SK-N-SH (cell line): ENCODE measurements at regions of chr2 and their contacts with region 1.

Region 1: DNA sequence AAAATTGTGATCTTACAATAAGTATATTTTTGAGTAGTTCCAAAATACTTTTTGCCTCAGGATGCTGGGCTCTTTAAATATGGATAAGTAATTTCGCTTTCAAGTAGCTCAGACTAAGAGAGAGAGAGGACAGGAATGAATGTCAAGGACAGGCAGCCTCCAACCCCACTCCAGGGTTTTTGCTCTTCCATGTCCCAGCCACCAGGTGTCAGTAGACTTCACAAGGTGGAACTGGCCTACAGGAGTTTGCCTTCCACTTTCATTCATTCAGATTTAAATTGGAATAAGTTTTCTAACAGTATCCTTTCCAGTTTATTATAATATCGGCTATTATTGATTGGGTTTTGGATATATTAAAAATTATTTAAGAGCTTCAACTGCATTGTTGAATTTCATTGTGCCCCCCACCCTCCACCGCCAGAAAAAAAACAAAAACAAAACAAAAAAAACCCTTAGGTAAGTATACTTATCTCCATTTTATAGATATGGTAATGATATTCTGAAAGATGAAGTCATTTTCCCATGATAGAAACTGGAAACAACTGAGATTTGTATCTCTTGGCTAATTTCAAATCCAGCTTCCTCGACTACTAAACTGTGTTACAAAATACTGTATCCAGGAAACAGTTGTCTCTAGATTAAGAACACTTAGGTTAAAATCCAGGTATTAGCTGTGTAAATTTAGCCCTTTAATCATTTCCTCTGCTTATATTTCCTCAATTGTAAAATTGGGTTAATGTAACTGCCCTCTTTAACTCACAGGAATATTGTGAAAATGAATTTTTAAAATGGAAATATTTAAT is 793.1 kb downstream of the ERBB4 start:
- DNase-seq: peak; percentile 65
- H3K4me3 ChIP-seq: no peak overlapping the region; a peak in 1 of 4 replicates
- H3K27ac ChIP-seq: no peak overlapping the region
- H3K4me1 ChIP-seq: no peaks in the 10 kb centered on the region
- H3K27me3 ChIP-seq: no peaks in the 10 kb centered on the region
- CTCF ChIP-seq: peak; percentile 94
- EP300 ChIP-seq: no peak
- RAD21 ChIP-seq: peak; percentile 97

Region 2: GRCh38 chr2:211760103-211760502 is 14.6 kb after region 1 on chr2:
- CTCF ChIA-PET with region 1: interaction called, 16 read pairs
- POLR2A ChIA-PET with region 1: no interaction called
- DNase-seq: no peak
- H3K4me3 ChIP-seq: no peak overlapping the region
- H3K27ac ChIP-seq: no peak overlapping the region
- H3K4me1 ChIP-seq: peaks cover 0 to 3% of the 10 kb centered on the region in 2 experiments; a peak in 1 of 4 replicates
- H3K27me3 ChIP-seq: no peaks in the 10 kb centered on the region
- CTCF ChIP-seq: no peak
- EP300 ChIP-seq: no peak
- RAD21 ChIP-seq: no peak

Region 3: DNA sequence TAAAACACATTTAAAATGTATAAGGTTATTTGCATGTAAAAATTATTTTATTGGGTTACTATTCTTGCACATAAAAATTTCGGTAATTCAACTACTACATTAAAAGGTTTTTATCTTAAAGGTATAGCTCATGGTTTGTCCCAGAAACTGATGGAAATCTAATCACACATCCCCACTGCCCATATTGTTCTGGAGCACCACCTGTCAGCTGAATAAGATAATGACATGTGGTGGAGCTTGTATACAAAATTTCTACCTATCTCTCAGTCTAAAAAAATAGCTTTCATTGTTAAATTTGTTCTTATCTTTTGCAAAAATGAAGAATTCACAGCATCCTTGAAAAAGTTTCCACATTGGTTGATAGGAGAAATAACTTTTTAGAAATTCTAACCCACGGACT is 774.8 kb after region 1 on chr2:
- CTCF ChIA-PET with region 1: interaction called, 25 read pairs
- POLR2A ChIA-PET with region 1: no interaction called
- DNase-seq: peak; percentile 26
- H3K4me3 ChIP-seq: no peak overlapping the region
- H3K27ac ChIP-seq: no peak overlapping the region
- H3K4me1 ChIP-seq: no peaks in the 10 kb centered on the region; a peak in 1 of 4 replicates
- H3K27me3 ChIP-seq: no peaks in the 10 kb centered on the region
- CTCF ChIP-seq: peak; percentile 56
- EP300 ChIP-seq: no peak
- RAD21 ChIP-seq: peak; percentile 78

Region 4: GRCh38 chr2:212536817-212537725 is 791.6 kb after region 1 on chr2:
- CTCF ChIA-PET with region 1: interaction called, 11 read pairs
- POLR2A ChIA-PET with region 1: no interaction called
- DNase-seq: peak; percentile 44
- H3K4me3 ChIP-seq: peak overlapping the region; percentile 65 to 72
- H3K27ac ChIP-seq: no peak overlapping the region
- H3K4me1 ChIP-seq: peaks cover 6 to 11% of the 10 kb centered on the region in 2 experiments; a peak in 3 of 4 replicates
- H3K27me3 ChIP-seq: peaks cover 33% of the 10 kb centered on the region
- CTCF ChIP-seq: no peak
- EP300 ChIP-seq: no peak
- RAD21 ChIP-seq: no peak

Region 5: DNA sequence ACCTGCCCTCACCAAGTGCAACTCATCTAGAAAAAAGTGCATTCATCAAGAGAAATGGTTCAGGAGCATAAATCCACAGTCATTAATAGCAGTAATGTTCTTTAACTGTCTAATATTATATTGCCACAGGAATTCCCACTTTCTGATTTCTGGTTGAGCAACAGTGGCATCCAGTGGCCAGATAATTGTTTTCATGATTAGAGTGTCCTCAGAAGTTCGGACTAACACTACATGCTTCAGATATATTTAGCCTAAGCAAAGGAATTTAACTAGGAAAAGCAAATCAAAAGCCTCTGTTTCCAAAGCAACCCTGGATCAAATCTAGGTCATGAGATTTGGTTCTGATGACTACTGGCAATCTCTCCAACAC is 802.9 kb after region 1 on chr2:
- CTCF ChIA-PET with region 1: interaction called, 14 read pairs
- POLR2A ChIA-PET with region 1: no interaction called
- DNase-seq: peak; percentile 28
- H3K4me3 ChIP-seq: no peak overlapping the region
- H3K27ac ChIP-seq: no peak overlapping the region
- H3K4me1 ChIP-seq: peaks cover 0 to 8% of the 10 kb centered on the region in 2 experiments; a peak in 2 of 4 replicates
- H3K27me3 ChIP-seq: no peaks in the 10 kb centered on the region
- CTCF ChIP-seq: peak; percentile 67
- EP300 ChIP-seq: no peak
- RAD21 ChIP-seq: peak; percentile 80